ENCODE measurements at regions of chr10 and their contacts with region 1.

Region 1: GRCh38 chr10:26481914-26482550 is 43.9 kb downstream of the APBB1IP start:
- DNase-seq: peak in 30 of 35 experiments; percentile 26 to 79 (median 56)
- ATAC-seq: peak; percentile 81 to 88 (median 82)
- H3K4me3 ChIP-seq: peak overlapping the region in 1 of 2 donors; percentile 20
- H3K4me3 Mint-ChIP-seq: peak overlapping the region; percentile 59 to 68 (median 60)
- H3K27ac ChIP-seq: peak overlapping the region; percentile 80
- H3K27ac Mint-ChIP-seq: peak overlapping the region; percentile 90
- H3K4me1 ChIP-seq: peaks cover 72 to 80% of the 10 kb centered on the region in 2 experiments
- H3K4me1 Mint-ChIP-seq: peaks cover 78 to 83% (median 82%) of the 10 kb centered on the region in 3 donors
- H3K27me3 ChIP-seq: no peaks in the 10 kb centered on the region
- H3K27me3 Mint-ChIP-seq: no peaks in the 10 kb centered on the region

Region 2: GRCh38 chr10:26359670-26360069 is 122.4 kb before region 1 on chr10:
- CTCF ChIA-PET with region 1: no interaction called
- POLR2A ChIA-PET with region 1: interaction called in 1 of 2 experiments, 12 read pairs
- DNase-seq: no peak
- ATAC-seq: no peak
- H3K4me3 ChIP-seq: no peak overlapping the region
- H3K4me3 Mint-ChIP-seq: no peak overlapping the region
- H3K27ac ChIP-seq: no peak overlapping the region
- H3K27ac Mint-ChIP-seq: no peak overlapping the region
- H3K4me1 ChIP-seq: no peaks in the 10 kb centered on the region
- H3K4me1 Mint-ChIP-seq: peaks cover 0 to 3% (median 1%) of the 10 kb centered on the region in 3 donors
- H3K27me3 ChIP-seq: no peaks in the 10 kb centered on the region
- H3K27me3 Mint-ChIP-seq: peaks cover 0 to 2% of the 10 kb centered on the region in 2 donors

Region 3: DNA sequence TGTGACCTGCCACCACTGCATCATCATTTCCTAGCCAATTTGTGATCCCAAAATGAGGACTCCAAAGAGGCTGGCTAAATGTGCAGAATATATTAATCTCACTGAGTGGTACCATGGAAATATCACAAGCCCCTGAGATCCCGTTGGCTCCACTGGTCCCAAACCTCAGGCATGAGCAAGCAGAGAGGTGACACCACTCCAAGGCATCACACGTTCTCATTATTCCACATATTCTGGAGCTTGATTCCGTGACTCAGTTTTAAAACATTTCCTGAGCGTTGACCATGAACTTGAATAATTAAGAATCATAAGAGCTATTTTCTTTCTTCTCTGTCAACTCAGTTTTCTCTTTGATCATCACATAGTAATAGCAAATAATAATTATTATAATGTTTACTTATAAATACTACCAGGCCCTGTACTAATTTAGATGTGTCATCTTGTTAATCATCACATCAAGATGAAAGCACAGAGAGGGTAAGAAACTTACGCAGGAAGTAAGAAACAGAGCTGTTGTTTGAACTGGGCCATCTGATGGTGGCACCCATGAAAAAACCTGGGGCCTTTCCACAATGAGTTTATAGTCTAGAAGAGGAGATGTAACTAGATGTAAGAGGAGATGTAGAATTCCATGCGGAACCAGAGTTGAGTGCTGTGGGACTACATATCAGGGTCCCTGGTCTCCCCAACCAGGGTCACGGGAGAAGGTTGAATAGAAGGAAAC is 40.4 kb before region 1 on chr10:
- CTCF ChIA-PET with region 1: interaction called in 1 of 2 experiments, 4 read pairs
- POLR2A ChIA-PET with region 1: interaction called in 1 of 2 experiments, 25 read pairs
- DNase-seq: peak in 2 of 35 experiments; percentile 16 to 64
- ATAC-seq: no peak
- H3K4me3 ChIP-seq: peak overlapping the region; percentile 16 to 36
- H3K4me3 Mint-ChIP-seq: peak overlapping the region; percentile 80 to 98 (median 93)
- H3K27ac ChIP-seq: peak overlapping the region; percentile 87
- H3K27ac Mint-ChIP-seq: peak overlapping the region; percentile 93 to 97
- H3K4me1 ChIP-seq: peaks cover 34 to 44% of the 10 kb centered on the region in 2 experiments
- H3K4me1 Mint-ChIP-seq: peaks cover 64 to 74% (median 66%) of the 10 kb centered on the region in 3 donors
- H3K27me3 ChIP-seq: no peaks in the 10 kb centered on the region
- H3K27me3 Mint-ChIP-seq: no peaks in the 10 kb centered on the region

Region 4: GRCh38 chr10:26468700-26469099 is 13.3 kb before region 1 on chr10:
- CTCF ChIA-PET with region 1: interaction called in 1 of 2 experiments, 4 read pairs
- POLR2A ChIA-PET with region 1: interaction called, 10 to 11 read pairs
- DNase-seq: peak; percentile 26 to 78 (median 59)
- ATAC-seq: peak; percentile 88 to 93 (median 92)
- H3K4me3 ChIP-seq: peak overlapping the region in 1 of 2 donors; percentile 17
- H3K4me3 Mint-ChIP-seq: peak overlapping the region; percentile 59 to 76 (median 70)
- H3K27ac ChIP-seq: peak overlapping the region; percentile 43
- H3K27ac Mint-ChIP-seq: peak overlapping the region; percentile 82 to 91
- H3K4me1 ChIP-seq: peaks cover 60 to 78% of the 10 kb centered on the region in 2 experiments
- H3K4me1 Mint-ChIP-seq: peaks cover 93 to 100% (median 94%) of the 10 kb centered on the region in 3 donors
- H3K27me3 ChIP-seq: no peaks in the 10 kb centered on the region
- H3K27me3 Mint-ChIP-seq: no peaks in the 10 kb centered on the region

Region 5: GRCh38 chr10:26499426-26499825 is 17.4 kb after region 1 on chr10:
- CTCF ChIA-PET with region 1: no interaction called
- POLR2A ChIA-PET with region 1: no interaction called
- DNase-seq: no peak
- ATAC-seq: no peak
- H3K4me3 ChIP-seq: no peak overlapping the region
- H3K4me3 Mint-ChIP-seq: no peak overlapping the region
- H3K27ac ChIP-seq: no peak overlapping the region
- H3K27ac Mint-ChIP-seq: peak overlapping the region in 1 of 2 donors; percentile 59
- H3K4me1 ChIP-seq: no peaks in the 10 kb centered on the region
- H3K4me1 Mint-ChIP-seq: peaks cover 33 to 45% (median 37%) of the 10 kb centered on the region in 3 donors
- H3K27me3 ChIP-seq: no peaks in the 10 kb centered on the region
- H3K27me3 Mint-ChIP-seq: no peaks in the 10 kb centered on the region

Measured in T-cell (primary cell).